A673 (cell line): ENCODE measurements at regions of chr7 and their contacts with region 1.

Region 1: GRCh38 chr7:22841954-22842353 is 19.3 kb upstream of the TOMM7 start:
- DNase-seq: no peak
- H3K4me3 ChIP-seq: no peak overlapping the region
- H3K27ac ChIP-seq: no peak overlapping the region
- H3K4me1 ChIP-seq: peaks cover under 1% of the 10 kb centered on the region
- H3K27me3 ChIP-seq: no peaks in the 10 kb centered on the region
- CTCF ChIP-seq: no peak

Region 2: DNA sequence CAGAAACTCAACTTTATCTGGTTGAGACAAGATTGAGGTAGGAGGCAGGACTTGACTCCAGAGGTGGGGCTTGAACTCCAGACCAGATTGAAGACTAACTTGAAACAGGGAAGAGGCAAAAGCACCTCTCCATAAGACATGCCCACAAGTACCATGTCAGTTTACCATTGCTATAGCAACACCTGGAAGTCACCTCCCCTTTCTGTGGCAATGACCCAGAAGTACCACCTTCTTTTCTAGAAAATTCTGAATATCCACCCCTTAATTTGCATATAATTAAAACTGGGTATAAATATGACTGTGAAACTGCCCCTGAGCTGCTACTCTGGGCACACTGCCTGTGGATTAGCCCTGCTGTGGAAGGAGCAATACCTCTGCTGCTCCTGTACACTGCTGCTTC is 14.4 kb before region 1 on chr7:
- CTCF ChIA-PET with region 1: no interaction called
- POLR2A ChIA-PET with region 1: interaction called, 12 read pairs
- intact Hi-C with region 1: no loop called
- DNase-seq: no peak
- H3K4me3 ChIP-seq: no peak overlapping the region
- H3K27ac ChIP-seq: no peak overlapping the region
- H3K4me1 ChIP-seq: peaks cover 4% of the 10 kb centered on the region
- H3K27me3 ChIP-seq: no peaks in the 10 kb centered on the region
- CTCF ChIP-seq: no peak